ENCODE measurements at regions of chr11 and their contacts with region 1.

Region 1: GRCh38 chr11:85682330-85683305 is 3.4 kb downstream of the CCDC89 start:
- DNase-seq: peak; percentile 84
- H3K4me3 ChIP-seq: peak overlapping the region; percentile 46 to 65 (median 63)
- H3K27ac ChIP-seq: peak overlapping the region; percentile 32 to 66 (median 60)
- H3K4me1 ChIP-seq: peaks cover 0 to 21% (median 12%) of the 10 kb centered on the region in 4 donors
- H3K27me3 ChIP-seq: no peaks in the 10 kb centered on the region
- CTCF ChIP-seq: no peak
- EP300 ChIP-seq: no peak
- POLR2A ChIP-seq: no peak

Region 2: GRCh38 chr11:85572056-85572455 is 110.6 kb before region 1 on chr11:
- intact Hi-C with region 1: no loop called
- DNase-seq: no peak
- H3K4me3 ChIP-seq: no peak overlapping the region
- H3K27ac ChIP-seq: no peak overlapping the region
- H3K4me1 ChIP-seq: no peaks in the 10 kb centered on the region
- H3K27me3 ChIP-seq: no peaks in the 10 kb centered on the region
- CTCF ChIP-seq: no peak
- EP300 ChIP-seq: no peak
- POLR2A ChIP-seq: no peak

Region 3: DNA sequence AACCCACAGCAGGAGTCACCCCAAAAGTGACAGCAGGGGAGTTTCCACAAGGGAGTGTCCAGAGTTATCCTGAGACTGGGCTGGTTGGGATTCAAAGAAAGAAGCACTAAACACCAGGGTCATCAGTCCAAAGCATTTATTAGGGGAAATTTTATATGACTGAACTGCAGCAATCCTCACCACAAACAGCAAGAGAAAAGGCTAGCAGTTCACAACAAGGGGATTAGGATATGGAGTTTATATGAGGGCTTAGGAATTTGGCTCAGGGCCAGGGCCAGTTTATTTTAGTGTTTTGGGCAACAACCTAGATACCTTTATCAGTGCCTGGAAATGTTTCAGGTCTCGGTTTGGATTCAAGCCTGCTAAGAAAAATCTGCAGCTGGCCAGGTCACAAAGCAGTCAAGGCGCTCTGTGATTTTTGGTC is 39.4 kb before region 1 on chr11:
- intact Hi-C with region 1: no loop called
- DNase-seq: no peak
- H3K4me3 ChIP-seq: no peak overlapping the region
- H3K27ac ChIP-seq: no peak overlapping the region
- H3K4me1 ChIP-seq: peaks cover 0 to 8% (median 4%) of the 10 kb centered on the region in 4 donors
- H3K27me3 ChIP-seq: no peaks in the 10 kb centered on the region
- CTCF ChIP-seq: no peak
- EP300 ChIP-seq: no peak
- POLR2A ChIP-seq: no peak

Region 4: GRCh38 chr11:85977751-85978160 is 295.1 kb after region 1 on chr11:
- intact Hi-C with region 1: loop called (anchors 10 kb)
- DNase-seq: no peak
- H3K4me3 ChIP-seq: no peak overlapping the region
- H3K27ac ChIP-seq: peak overlapping the region in 2 of 4 donors; percentile 19 to 30
- H3K4me1 ChIP-seq: peaks cover 0 to 18% (median 7%) of the 10 kb centered on the region in 4 donors
- H3K27me3 ChIP-seq: no peaks in the 10 kb centered on the region
- CTCF ChIP-seq: no peak
- EP300 ChIP-seq: no peak
- POLR2A ChIP-seq: no peak

Region 5: GRCh38 chr11:86255896-86256295 is 573.3 kb after region 1 on chr11:
- intact Hi-C with region 1: no loop called
- DNase-seq: no peak
- H3K4me3 ChIP-seq: no peak overlapping the region
- H3K27ac ChIP-seq: no peak overlapping the region
- H3K4me1 ChIP-seq: peaks cover 0 to 6% (median 3%) of the 10 kb centered on the region in 4 donors
- H3K27me3 ChIP-seq: no peaks in the 10 kb centered on the region
- CTCF ChIP-seq: no peak
- EP300 ChIP-seq: no peak
- POLR2A ChIP-seq: no peak

Measured in sigmoid colon (tissue), 7 donors.